H1 (cell line): ENCODE measurements at regions of chr22 and their contacts with region 1.

Region 1: GRCh38 chr22:41526837-41527799 is 17.2 kb downstream of the POLR3H start:
- DNase-seq: peak in 1 of 2 experiments; percentile 90
- H3K4me3 ChIP-seq: no peak overlapping the region
- H3K27ac ChIP-seq: no peak overlapping the region
- H3K4me1 ChIP-seq: no peaks in the 10 kb centered on the region; a peak in 1 of 7 replicates
- H3K27me3 ChIP-seq: no peaks in the 10 kb centered on the region
- CTCF ChIP-seq: peak; percentile 76 to 91 (median 85)
- EP300 ChIP-seq: no peak
- POLR2A ChIP-seq: peak in 1 of 2 experiments; percentile 62; a peak in 1 of 3 replicates
- RAD21 ChIP-seq: peak; percentile 70 to 76

Region 2: GRCh38 chr22:41411021-41411851 is 115.9 kb before region 1 on chr22:
- CTCF ChIA-PET with region 1: interaction called, 28 read pairs
- POLR2A ChIA-PET with region 1: interaction called, 12 read pairs
- DNase-seq: no peak
- H3K4me3 ChIP-seq: no peak overlapping the region
- H3K27ac ChIP-seq: no peak overlapping the region
- H3K4me1 ChIP-seq: peaks cover 0 to 21% (median 14%) of the 10 kb centered on the region in 4 experiments; a peak in 6 of 7 replicates
- H3K27me3 ChIP-seq: no peaks in the 10 kb centered on the region; a peak in 1 of 7 replicates
- CTCF ChIP-seq: no peak
- EP300 ChIP-seq: no peak
- POLR2A ChIP-seq: no peak
- RAD21 ChIP-seq: no peak

Region 3: GRCh38 chr22:41543854-41544670 is 16.9 kb after region 1 on chr22 and contains the start of gene POLR3H:
- CTCF ChIA-PET with region 1: interaction called, 21 read pairs
- POLR2A ChIA-PET with region 1: interaction called, 15 read pairs
- DNase-seq: peak; percentile 91 to 98
- H3K4me3 ChIP-seq: peak within 1 kb of the TSS; percentile 51 to 90 (median 82)
- H3K27ac ChIP-seq: peak within 1 kb of the TSS; percentile 65; the same call in 1 of the 2 replicates
- H3K4me1 ChIP-seq: peaks cover 0 to 5% (median under 1%) of the 10 kb centered on the region in 4 experiments; a peak in 3 of 7 replicates
- H3K27me3 ChIP-seq: 0 out of 7 replicates have a peak, but pooled peaks cover 0 to 2% (median 0%) of the 10 kb centered on the region in 4 experiments
- CTCF ChIP-seq: peak; percentile 34 to 61 (median 45); a peak in 3 of 4 replicates
- EP300 ChIP-seq: no peak
- POLR2A ChIP-seq: peak in 1 of 2 experiments; percentile 58; a peak in 2 of 3 replicates
- RAD21 ChIP-seq: peak in 1 of 2 experiments; percentile 29; a peak in 2 of 4 replicates
- total RNA-seq, gene POLR3H: 34.5 and 39.2 TPM in 2 replicates

Region 4: GRCh38 chr22:41551877-41552582 is 24.9 kb after region 1 on chr22:
- CTCF ChIA-PET with region 1: interaction called, 5 read pairs
- POLR2A ChIA-PET with region 1: interaction called, 12 read pairs
- DNase-seq: no peak
- H3K4me3 ChIP-seq: no peak overlapping the region
- H3K27ac ChIP-seq: no peak overlapping the region
- H3K4me1 ChIP-seq: peaks cover 0 to 2% (median 1%) of the 10 kb centered on the region in 4 experiments; a peak in 3 of 7 replicates
- H3K27me3 ChIP-seq: no peaks in the 10 kb centered on the region
- CTCF ChIP-seq: no peak
- EP300 ChIP-seq: no peak
- POLR2A ChIP-seq: no peak
- RAD21 ChIP-seq: no peak

Region 5: DNA sequence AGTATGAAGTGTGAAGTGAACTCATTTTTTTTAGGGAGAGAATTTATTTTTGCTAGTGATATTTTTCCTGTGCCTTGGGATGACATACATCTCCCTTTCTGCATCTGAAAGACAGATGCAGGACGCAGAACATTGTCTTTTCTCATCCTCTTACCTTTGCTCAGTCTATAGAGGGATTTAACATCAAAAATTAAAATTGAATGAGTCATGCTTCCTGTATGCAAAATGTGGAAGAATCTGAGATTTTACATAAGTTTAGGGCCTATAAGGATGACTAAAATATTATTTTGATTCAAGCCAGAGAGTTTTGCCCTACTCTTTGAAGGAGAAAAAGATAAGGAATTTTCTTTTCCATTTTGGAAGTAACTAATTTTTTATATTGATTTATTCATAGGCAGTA is 121.3 kb after region 1 on chr22:
- CTCF ChIA-PET with region 1: no interaction called
- POLR2A ChIA-PET with region 1: no interaction called
- DNase-seq: no peak
- H3K4me3 ChIP-seq: no peak overlapping the region
- H3K27ac ChIP-seq: no peak overlapping the region
- H3K4me1 ChIP-seq: no peaks in the 10 kb centered on the region
- H3K27me3 ChIP-seq: no peaks in the 10 kb centered on the region
- CTCF ChIP-seq: no peak
- EP300 ChIP-seq: no peak
- POLR2A ChIP-seq: no peak
- RAD21 ChIP-seq: no peak

Region 6: GRCh38 chr22:42070517-42071422 is 543.7 kb after region 1 on chr22 and contains the start of gene NAGA:
- CTCF ChIA-PET with region 1: no interaction called
- POLR2A ChIA-PET with region 1: no interaction called
- DNase-seq: peak; percentile 91 to 94
- H3K4me3 ChIP-seq: peak within 1 kb of the TSS; percentile 36 to 71 (median 62)
- H3K27ac ChIP-seq: peak within 1 kb of the TSS; percentile 86
- H3K4me1 ChIP-seq: peaks cover 2 to 25% (median 12%) of the 10 kb centered on the region in 4 experiments
- H3K27me3 ChIP-seq: peaks cover 0 to 9% (median 4%) of the 10 kb centered on the region in 4 experiments; a peak in 2 of 7 replicates
- CTCF ChIP-seq: no peak
- EP300 ChIP-seq: no peak
- POLR2A ChIP-seq: peak in 1 of 2 experiments; percentile 84; a peak in 2 of 3 replicates
- RAD21 ChIP-seq: no peak
- total RNA-seq, gene NAGA: 14.7 and 14.8 TPM in 2 replicates